HCT116 (cell line): ENCODE measurements at regions of chr17 and their contacts with region 1.

Region 1: DNA sequence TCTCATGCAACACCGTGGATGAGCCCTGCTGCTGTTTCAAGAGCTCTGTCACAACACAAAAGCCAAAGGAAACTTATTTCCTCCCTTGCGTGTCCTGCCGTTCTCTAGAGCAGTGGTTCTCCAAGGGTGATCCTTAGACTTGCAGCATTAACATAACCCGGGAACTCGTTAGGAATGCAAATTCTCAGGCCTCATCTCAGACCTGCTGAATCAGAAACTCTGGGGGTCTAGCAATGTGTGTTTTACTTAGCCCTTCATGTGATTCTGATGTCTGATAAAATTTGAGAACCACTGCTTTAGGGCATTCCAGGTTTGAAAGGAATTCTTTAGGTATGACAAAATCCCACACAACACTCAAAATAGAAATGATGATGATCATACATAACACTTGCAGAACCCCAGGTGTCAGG is 51.3 kb upstream of the MTMR4 start:
- DNase-seq: no peak
- ATAC-seq: no peak
- H3K4me3 ChIP-seq: no peak overlapping the region
- H3K27ac ChIP-seq: no peak overlapping the region
- H3K4me1 ChIP-seq: 0 out of 4 replicates have a peak, but pooled peaks cover 0 to 6% of the 10 kb centered on the region in 2 experiments
- H3K27me3 ChIP-seq: no peaks in the 10 kb centered on the region
- CTCF ChIP-seq: no peak
- POLR2A ChIP-seq: no peak
- RAD21 ChIP-seq: no peak

Region 2: GRCh38 chr17:58277107-58277801 is 288.5 kb before region 1 on chr17:
- CTCF ChIA-PET with region 1: no interaction called
- POLR2A ChIA-PET with region 1: no interaction called
- RAD21 ChIA-PET with region 1: no interaction called
- intact Hi-C with region 1: no loop called
- DNase-seq: peak; percentile 18
- ATAC-seq: peak; percentile 74
- H3K4me3 ChIP-seq: no peak overlapping the region
- H3K27ac ChIP-seq: no peak overlapping the region
- H3K4me1 ChIP-seq: peaks cover 0 to 3% of the 10 kb centered on the region in 2 experiments; a peak in 1 of 4 replicates
- H3K27me3 ChIP-seq: no peaks in the 10 kb centered on the region
- CTCF ChIP-seq: peak; percentile 73 to 80 (median 74); a peak in 5 of 6 replicates
- POLR2A ChIP-seq: no peak
- RAD21 ChIP-seq: peak; percentile 80

Region 3: DNA sequence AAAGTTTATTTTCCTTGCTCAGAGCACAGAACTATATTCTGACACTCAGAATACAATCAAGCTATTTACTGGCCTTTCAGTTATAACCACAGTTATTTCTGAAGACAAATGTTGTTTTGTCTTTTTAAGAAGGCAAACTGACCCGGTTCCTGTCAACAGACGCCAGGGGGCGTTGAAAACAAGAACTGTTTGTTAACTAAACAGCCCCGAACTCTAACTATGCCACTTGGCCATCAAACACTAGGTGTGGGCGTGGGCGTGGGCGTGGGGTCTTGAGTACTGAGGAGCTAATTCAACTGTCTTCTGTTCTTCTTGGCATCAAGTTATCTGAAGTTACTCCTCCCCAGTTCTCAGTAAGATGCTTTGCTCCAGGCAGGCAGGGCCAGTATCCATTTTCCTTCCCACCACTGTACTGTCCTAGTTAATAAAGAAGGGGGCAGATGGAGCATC is 11.9 kb after region 1 on chr17:
- CTCF ChIA-PET with region 1: interaction called, 12 read pairs
- POLR2A ChIA-PET with region 1: no interaction called
- RAD21 ChIA-PET with region 1: no interaction called
- intact Hi-C with region 1: no loop called
- DNase-seq: peak; percentile 77
- ATAC-seq: peak; percentile 87
- H3K4me3 ChIP-seq: no peak overlapping the region
- H3K27ac ChIP-seq: no peak overlapping the region
- H3K4me1 ChIP-seq: peaks cover 5 to 21% of the 10 kb centered on the region in 2 experiments
- H3K27me3 ChIP-seq: no peaks in the 10 kb centered on the region
- CTCF ChIP-seq: peak; percentile 56 to 98 (median 93); a peak in 5 of 6 replicates
- POLR2A ChIP-seq: no peak
- RAD21 ChIP-seq: peak; percentile 66